Left colon (tissue), 2 donors: ENCODE measurements at regions of chr7 and their contacts with region 1.

Region 1: DNA sequence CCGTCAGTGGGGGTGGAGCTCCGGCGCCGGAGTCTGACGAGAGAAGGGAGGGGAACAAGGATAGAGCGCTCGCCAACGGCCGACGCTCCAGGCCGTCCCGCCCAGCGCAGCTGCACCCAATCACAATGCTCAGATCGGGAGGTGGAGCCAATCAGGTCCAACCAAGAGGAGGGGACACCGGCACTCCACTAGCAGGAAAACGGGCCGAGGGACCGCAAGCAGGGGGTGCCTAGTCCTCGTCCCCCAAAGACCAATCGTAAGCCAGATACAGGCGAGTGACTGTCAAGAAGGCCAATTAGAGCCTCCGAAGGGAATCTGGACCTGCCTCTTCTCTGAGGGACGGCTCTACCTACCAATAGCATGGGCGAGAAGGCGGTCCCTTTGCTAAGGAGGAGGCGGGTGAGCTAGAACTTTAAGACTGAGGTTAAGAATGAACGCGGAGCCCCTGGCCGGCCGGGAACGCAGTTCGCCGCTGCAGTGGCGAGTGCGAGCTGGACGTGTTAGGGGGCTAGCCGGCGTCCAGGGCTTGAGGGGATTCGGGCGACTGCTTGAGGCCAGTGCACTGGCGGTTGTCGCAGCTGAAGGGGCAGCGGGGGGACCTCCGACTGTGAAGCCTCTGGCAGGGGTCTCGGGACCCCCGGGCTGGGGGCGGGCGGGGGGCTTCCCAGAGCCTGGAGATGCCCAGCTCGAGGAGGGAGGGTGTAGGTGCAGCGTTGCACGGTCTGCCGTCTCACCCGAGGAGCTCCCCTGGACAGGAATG is at the start of gene FBXO24:
- DNase-seq: peak; percentile 99 to 100
- ATAC-seq: peak; percentile 78
- total RNA-seq, gene FBXO24: 0.34 to 0.58 TPM

Region 2: DNA sequence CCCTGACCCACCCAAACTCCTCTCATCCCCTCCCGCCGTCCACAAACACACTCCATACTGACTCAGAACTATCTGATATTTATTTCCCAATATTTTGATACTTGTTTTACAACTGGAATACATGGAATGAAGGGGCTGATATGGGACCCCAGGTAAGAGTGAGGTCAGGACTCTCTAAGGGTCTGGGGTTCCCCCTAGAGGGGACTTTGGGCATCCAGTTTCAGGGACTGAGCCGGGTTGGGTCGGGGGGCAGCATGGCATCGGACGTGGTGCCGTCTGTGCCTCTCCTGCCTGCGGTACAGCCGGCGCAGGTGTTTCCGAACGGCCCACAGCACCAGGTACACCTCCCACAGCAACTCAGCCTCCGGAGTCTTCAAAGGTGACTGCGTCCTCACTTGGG is 129.9 kb before region 1 on chr7:
- intact Hi-C with region 1: no loop called
- DNase-seq: no peak
- ATAC-seq: no peak

Region 3: GRCh38 chr7:100680167-100680575 is 93.7 kb after region 1 on chr7:
- intact Hi-C with region 1: loop called in 1 of 2 experiments (anchors 10 kb)
- DNase-seq: no peak
- ATAC-seq: no peak